MCF 10A (cell line): ENCODE measurements at regions of chr6 and their contacts with region 1.

Region 1: DNA sequence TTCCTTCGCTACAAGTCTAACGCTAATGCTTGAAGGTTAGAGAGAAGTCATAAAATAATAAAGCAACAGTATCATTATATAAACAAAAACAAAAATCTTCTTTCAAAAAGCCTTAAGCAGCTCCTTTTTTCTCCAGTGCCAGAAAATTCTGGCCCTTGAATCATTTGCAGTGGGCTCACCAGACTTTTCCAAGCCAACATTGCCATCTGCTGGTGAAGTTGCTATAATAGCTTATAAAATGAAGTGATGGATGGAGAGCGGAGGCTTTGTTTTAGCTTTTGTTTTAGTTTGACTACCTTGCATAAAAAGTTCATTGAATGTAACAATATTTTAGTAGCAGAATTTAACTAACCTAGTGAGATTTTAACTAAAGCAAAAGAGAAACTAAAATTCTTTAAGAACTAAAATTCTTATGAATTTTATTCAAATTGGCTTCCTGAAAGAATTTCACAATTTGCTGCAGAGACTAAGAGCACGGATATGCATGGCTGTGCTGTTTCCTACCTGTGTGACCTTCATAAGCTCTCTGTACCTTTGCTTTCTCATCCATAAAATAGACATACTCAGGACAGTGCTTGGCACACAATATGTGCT is 44.8 kb upstream of the SLC2A12 start:
- DNase-seq: peak; percentile 83
- H3K4me3 Mint-ChIP-seq: no peak overlapping the region
- H3K27ac Mint-ChIP-seq: no peak overlapping the region
- H3K4me1 Mint-ChIP-seq: no peaks in the 10 kb centered on the region
- H3K27me3 Mint-ChIP-seq: peaks cover 13% of the 10 kb centered on the region
- CTCF ChIP-seq: peak; percentile 61

Region 2: DNA sequence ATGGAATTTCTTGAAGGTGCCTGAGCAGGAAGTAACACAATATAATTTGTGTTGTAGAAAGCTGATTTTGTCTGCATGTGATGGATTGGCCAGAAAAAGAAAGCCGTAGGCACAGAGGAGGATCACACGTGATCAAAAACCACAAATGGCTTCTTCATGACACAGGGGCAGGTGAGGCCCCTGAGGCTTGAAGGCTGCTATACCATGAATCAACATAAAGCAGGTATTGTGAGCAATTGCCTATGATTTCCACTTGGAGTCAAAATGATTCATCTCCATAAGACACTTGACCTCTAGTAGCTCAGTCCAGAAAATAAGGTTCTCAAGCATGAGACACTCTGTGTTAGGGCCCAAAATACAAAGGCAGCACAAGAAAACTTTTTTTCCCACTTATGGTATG is 898.5 kb before region 1 on chr6:
- CTCF ChIA-PET with region 1: no interaction called
- POLR2A ChIA-PET with region 1: no interaction called
- intact Hi-C with region 1: loop called (anchors 10 kb)
- DNase-seq: peak; percentile 5
- H3K4me3 Mint-ChIP-seq: no peak overlapping the region
- H3K27ac Mint-ChIP-seq: no peak overlapping the region
- H3K4me1 Mint-ChIP-seq: no peaks in the 10 kb centered on the region
- H3K27me3 Mint-ChIP-seq: peaks cover 100% of the 10 kb centered on the region
- CTCF ChIP-seq: no peak

Region 3: GRCh38 chr6:133939778-133940667 is 157.2 kb before region 1 on chr6:
- CTCF ChIA-PET with region 1: interaction called, 23 read pairs
- POLR2A ChIA-PET with region 1: no interaction called
- intact Hi-C with region 1: no loop called
- DNase-seq: no peak
- H3K4me3 Mint-ChIP-seq: no peak overlapping the region
- H3K27ac Mint-ChIP-seq: no peak overlapping the region
- H3K4me1 Mint-ChIP-seq: no peaks in the 10 kb centered on the region
- H3K27me3 Mint-ChIP-seq: no peaks in the 10 kb centered on the region
- CTCF ChIP-seq: no peak

Region 4: GRCh38 chr6:133952815-133953633 is 144.2 kb before region 1 on chr6 and contains the start of gene TBPL1:
- CTCF ChIA-PET with region 1: interaction called, 19 read pairs
- POLR2A ChIA-PET with region 1: no interaction called
- intact Hi-C with region 1: no loop called
- DNase-seq: peak; percentile 95
- H3K4me3 Mint-ChIP-seq: peak within 1 kb of the TSS; percentile 94
- H3K27ac Mint-ChIP-seq: peak within 1 kb of the TSS; percentile 88
- H3K4me1 Mint-ChIP-seq: peaks cover 36% of the 10 kb centered on the region
- H3K27me3 Mint-ChIP-seq: no peaks in the 10 kb centered on the region
- CTCF ChIP-seq: no peak
- total RNA-seq, gene TBPL1: 40.9 and 51.8 TPM in 2 replicates

Region 5: GRCh38 chr6:133973109-133973971 is 123.9 kb before region 1 on chr6:
- CTCF ChIA-PET with region 1: interaction called, 62 read pairs
- POLR2A ChIA-PET with region 1: interaction called, 8 read pairs
- intact Hi-C with region 1: loop called (anchors 1 kb)
- DNase-seq: peak; percentile 67
- H3K4me3 Mint-ChIP-seq: no peak overlapping the region
- H3K27ac Mint-ChIP-seq: no peak overlapping the region
- H3K4me1 Mint-ChIP-seq: peaks cover 13% of the 10 kb centered on the region
- H3K27me3 Mint-ChIP-seq: no peaks in the 10 kb centered on the region
- CTCF ChIP-seq: peak; percentile 38

Region 6: GRCh38 chr6:134015719-134016557 is 81.3 kb before region 1 on chr6:
- CTCF ChIA-PET with region 1: interaction called, 16 read pairs
- POLR2A ChIA-PET with region 1: no interaction called
- intact Hi-C with region 1: no loop called
- DNase-seq: no peak
- H3K4me3 Mint-ChIP-seq: no peak overlapping the region
- H3K27ac Mint-ChIP-seq: no peak overlapping the region
- H3K4me1 Mint-ChIP-seq: peaks cover 4% of the 10 kb centered on the region
- H3K27me3 Mint-ChIP-seq: no peaks in the 10 kb centered on the region
- CTCF ChIP-seq: no peak

Region 7: DNA sequence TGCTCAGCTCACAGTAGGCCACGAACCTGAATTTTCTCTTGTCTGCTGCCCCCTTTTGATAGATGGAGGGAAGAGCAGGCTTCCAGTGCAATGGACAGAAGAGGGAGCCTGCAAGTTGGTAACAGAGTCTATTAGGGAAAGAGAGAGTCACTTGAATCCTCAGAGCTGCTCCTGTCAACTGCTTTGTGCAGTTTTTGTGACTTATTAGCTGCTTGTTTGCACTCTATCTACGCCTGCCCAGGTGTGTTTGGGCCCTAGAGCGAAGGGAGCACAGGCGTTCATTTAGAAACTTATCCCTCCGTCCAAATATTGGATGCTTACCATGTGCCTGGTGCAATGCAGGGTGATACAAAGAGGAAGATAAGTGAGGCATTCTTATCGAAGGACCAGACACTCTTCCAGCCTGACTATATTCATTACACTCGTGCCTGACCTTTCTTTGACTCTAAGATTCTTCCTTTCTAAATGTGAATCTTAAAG is 33.2 kb before region 1 on chr6:
- CTCF ChIA-PET with region 1: interaction called, 39 read pairs
- POLR2A ChIA-PET with region 1: interaction called, 4 read pairs
- intact Hi-C with region 1: loop called (anchors 5 kb)
- DNase-seq: peak; percentile 73
- H3K4me3 Mint-ChIP-seq: no peak overlapping the region
- H3K27ac Mint-ChIP-seq: no peak overlapping the region
- H3K4me1 Mint-ChIP-seq: peaks cover 11% of the 10 kb centered on the region
- H3K27me3 Mint-ChIP-seq: no peaks in the 10 kb centered on the region
- CTCF ChIP-seq: peak; percentile 84